ENCODE measurements at regions of chr10 and their contacts with region 1.

Region 1: DNA sequence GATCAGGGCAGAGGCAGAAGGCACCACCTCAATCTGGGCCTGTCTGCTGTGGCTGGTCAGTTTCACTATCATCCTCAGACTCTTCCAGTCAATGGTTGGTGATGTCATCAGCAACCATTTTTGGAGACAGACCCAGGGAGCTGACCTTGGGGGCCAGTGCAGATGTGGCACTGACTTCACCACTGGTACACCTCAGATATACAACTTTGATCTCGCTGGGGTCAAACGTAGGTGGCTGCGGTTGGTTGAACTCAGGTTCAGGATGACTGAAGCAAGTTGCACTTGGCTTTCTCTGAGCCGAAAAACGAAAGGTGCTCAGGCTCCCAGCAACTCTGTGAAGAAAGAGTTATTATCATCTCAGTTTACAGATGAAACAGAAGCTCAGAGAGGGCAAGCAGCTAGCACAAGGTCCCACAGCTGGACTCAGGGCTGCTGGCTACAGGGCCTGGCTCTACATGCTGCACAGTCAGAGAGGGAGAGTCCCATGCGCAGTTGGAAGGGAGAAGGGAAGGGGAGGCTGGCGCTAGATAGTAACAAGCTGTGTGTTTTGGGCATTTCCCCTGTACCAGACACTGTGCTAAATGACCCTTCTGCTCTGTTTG is 27.2 kb downstream of the ANKRD16 start:
- DNase-seq: no peak
- H3K4me3 ChIP-seq: no peak overlapping the region
- H3K27ac ChIP-seq: peak overlapping the region in 1 of 2 experiments; percentile 90; a peak in 2 of 4 replicates
- H3K4me1 ChIP-seq: no peaks in the 10 kb centered on the region
- H3K27me3 ChIP-seq: no peaks in the 10 kb centered on the region
- CTCF ChIP-seq: no peak
- EP300 ChIP-seq: no peak
- RAD21 ChIP-seq: no peak

Region 2: GRCh38 chr10:5534880-5535856 is 327.3 kb before region 1 on chr10:
- CTCF ChIA-PET with region 1: no interaction called
- POLR2A ChIA-PET with region 1: no interaction called
- DNase-seq: no peak
- H3K4me3 ChIP-seq: no peak overlapping the region
- H3K27ac ChIP-seq: no peak overlapping the region
- H3K4me1 ChIP-seq: no peaks in the 10 kb centered on the region
- H3K27me3 ChIP-seq: no peaks in the 10 kb centered on the region
- CTCF ChIP-seq: no peak
- EP300 ChIP-seq: no peak
- RAD21 ChIP-seq: no peak

Region 3: DNA sequence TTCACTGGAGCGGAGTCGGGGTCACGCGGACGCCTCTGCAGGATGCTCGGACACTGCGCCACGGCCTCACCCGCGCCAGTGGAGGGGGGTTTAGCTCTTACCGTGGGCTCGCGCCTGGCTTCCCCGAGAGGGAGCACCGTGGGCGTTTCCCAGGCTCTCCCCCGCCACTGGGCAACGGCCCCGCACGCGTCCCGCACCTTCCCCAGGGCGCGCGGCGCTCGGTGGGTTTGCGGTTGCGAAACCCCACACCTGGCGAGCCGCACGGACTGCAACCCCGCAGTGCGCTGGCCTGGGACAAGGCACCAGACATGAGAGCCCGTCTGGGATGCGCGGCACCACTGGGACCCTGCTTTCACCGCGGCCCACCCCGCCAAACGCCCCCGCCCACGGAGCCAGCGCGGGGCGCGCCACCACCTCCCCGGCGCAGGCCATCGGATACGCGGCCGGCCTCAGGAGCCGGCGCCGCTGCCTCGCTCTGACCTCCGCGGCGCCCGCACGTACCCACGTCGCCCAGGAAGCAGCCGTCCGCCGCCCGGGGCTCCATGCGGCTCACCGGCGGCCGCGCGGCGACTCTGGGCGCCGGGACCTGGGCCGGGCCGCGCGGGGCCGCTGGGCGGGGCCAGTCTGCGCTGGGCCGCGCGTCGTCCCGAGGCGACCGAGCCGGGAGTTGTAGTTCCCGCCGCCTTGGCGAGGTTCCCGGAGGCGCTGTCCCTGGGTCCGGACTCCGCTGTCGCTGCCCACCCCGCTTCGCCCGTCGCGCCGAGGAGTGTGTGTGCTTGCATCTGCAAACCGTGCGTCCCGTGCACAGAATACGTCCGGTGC is 196.2 kb before region 1 on chr10 and contains the start of gene ASB13:
- CTCF ChIA-PET with region 1: no interaction called
- POLR2A ChIA-PET with region 1: no interaction called
- DNase-seq: peak; percentile 93
- H3K4me3 ChIP-seq: peak within 1 kb of the TSS; percentile 86 to 93
- H3K27ac ChIP-seq: peak within 1 kb of the TSS; percentile 20 to 78; a peak in 2 of 4 replicates
- H3K4me1 ChIP-seq: peaks cover 0 to 23% of the 10 kb centered on the region in 2 experiments; a peak in 2 of 4 replicates
- H3K27me3 ChIP-seq: no peaks in the 10 kb centered on the region
- CTCF ChIP-seq: no peak
- EP300 ChIP-seq: no peak
- RAD21 ChIP-seq: no peak
- polyA plus RNA-seq, gene ASB13: 9.2 TPM in 2 replicates

Region 4: GRCh38 chr10:5873515-5873995 is 11.1 kb after region 1 on chr10:
- CTCF ChIA-PET with region 1: interaction called, 13 read pairs
- POLR2A ChIA-PET with region 1: no interaction called
- DNase-seq: peak; percentile 81
- H3K4me3 ChIP-seq: no peak overlapping the region; a peak in 1 of 4 replicates
- H3K27ac ChIP-seq: no peak overlapping the region
- H3K4me1 ChIP-seq: peaks cover 8 to 14% of the 10 kb centered on the region in 2 experiments; a peak in 2 of 4 replicates
- H3K27me3 ChIP-seq: no peaks in the 10 kb centered on the region
- CTCF ChIP-seq: peak; percentile 78
- EP300 ChIP-seq: no peak
- RAD21 ChIP-seq: peak; percentile 71

Region 5: GRCh38 chr10:6195846-6196245 is 333.4 kb after region 1 on chr10:
- CTCF ChIA-PET with region 1: no interaction called
- POLR2A ChIA-PET with region 1: no interaction called
- DNase-seq: no peak
- H3K4me3 ChIP-seq: no peak overlapping the region
- H3K27ac ChIP-seq: no peak overlapping the region
- H3K4me1 ChIP-seq: peaks cover 3 to 12% of the 10 kb centered on the region in 2 experiments; a peak in 3 of 4 replicates
- H3K27me3 ChIP-seq: no peaks in the 10 kb centered on the region
- CTCF ChIP-seq: no peak
- EP300 ChIP-seq: no peak
- RAD21 ChIP-seq: no peak